CD8-positive, alpha-beta memory T cell (primary cell): ENCODE measurements at regions of chr2 and their contacts with region 1.

Region 1: GRCh38 chr2:26033818-26034636 is at the start of gene RAB10:
- DNase-seq: peak; percentile 97 to 100 (median 99)
- H3K4me3 ChIP-seq: peak within 1 kb of the TSS; percentile 98
- H3K4me3 Mint-ChIP-seq: peak within 1 kb of the TSS; percentile 84 to 99 (median 96)
- H3K27ac ChIP-seq: peak within 1 kb of the TSS; percentile 92
- H3K27ac Mint-ChIP-seq: peak within 1 kb of the TSS; percentile 95 to 97 (median 96)
- H3K4me1 ChIP-seq: peaks cover 30% of the 10 kb centered on the region
- H3K4me1 Mint-ChIP-seq: peaks cover 38 to 50% (median 39%) of the 10 kb centered on the region in 3 donors
- H3K27me3 ChIP-seq: no peaks in the 10 kb centered on the region
- H3K27me3 Mint-ChIP-seq: no peaks in the 10 kb centered on the region
- total RNA-seq, gene RAB10: 155 to 167 TPM

Region 2: GRCh38 chr2:25726522-25726921 is 307.5 kb before region 1 on chr2:
- CTCF ChIA-PET with region 1: no interaction called
- POLR2A ChIA-PET with region 1: no interaction called
- DNase-seq: no peak
- H3K4me3 ChIP-seq: no peak overlapping the region
- H3K4me3 Mint-ChIP-seq: no peak overlapping the region
- H3K27ac ChIP-seq: no peak overlapping the region
- H3K27ac Mint-ChIP-seq: no peak overlapping the region
- H3K4me1 ChIP-seq: no peaks in the 10 kb centered on the region
- H3K4me1 Mint-ChIP-seq: peaks cover 0 to 7% (median 4%) of the 10 kb centered on the region in 3 donors
- H3K27me3 ChIP-seq: no peaks in the 10 kb centered on the region
- H3K27me3 Mint-ChIP-seq: peaks cover 3% of the 10 kb centered on the region in 2 donors

Region 3: GRCh38 chr2:25878361-25879132 is 155.5 kb before region 1 on chr2 and contains the start of gene ASXL2:
- CTCF ChIA-PET with region 1: interaction called, 3 read pairs
- POLR2A ChIA-PET with region 1: interaction called, 10 read pairs
- DNase-seq: peak; percentile 95 to 99 (median 97)
- H3K4me3 ChIP-seq: peak within 1 kb of the TSS; percentile 90
- H3K4me3 Mint-ChIP-seq: peak within 1 kb of the TSS; percentile 93 to 97 (median 96)
- H3K27ac ChIP-seq: peak within 1 kb of the TSS; percentile 96
- H3K27ac Mint-ChIP-seq: peak within 1 kb of the TSS; percentile 97 to 99 (median 98)
- H3K4me1 ChIP-seq: peaks cover 25% of the 10 kb centered on the region
- H3K4me1 Mint-ChIP-seq: peaks cover 30 to 43% (median 43%) of the 10 kb centered on the region in 3 donors
- H3K27me3 ChIP-seq: no peaks in the 10 kb centered on the region
- H3K27me3 Mint-ChIP-seq: no peaks in the 10 kb centered on the region
- total RNA-seq, gene ASXL2: 67.5 to 72.7 TPM

Region 4: DNA sequence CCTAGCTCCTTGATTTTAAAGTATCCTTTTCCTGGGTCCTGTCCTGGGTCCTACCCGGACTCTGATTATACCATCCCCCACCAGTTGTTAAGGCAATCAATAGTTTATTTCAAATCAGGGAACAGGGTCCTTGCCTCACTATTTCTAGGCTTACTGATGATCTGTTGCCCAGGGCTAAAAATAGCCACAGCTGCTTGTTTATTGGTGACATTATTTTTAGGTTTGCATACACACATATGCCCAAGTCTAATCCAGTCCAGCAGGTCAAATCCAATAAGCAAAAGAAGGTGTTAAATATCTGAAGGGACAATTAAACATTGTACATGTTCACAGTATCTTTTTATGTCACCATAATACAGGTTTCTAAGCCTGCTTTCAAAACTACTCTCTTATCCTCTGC is 65.9 kb after region 1 on chr2:
- CTCF ChIA-PET with region 1: no interaction called
- POLR2A ChIA-PET with region 1: no interaction called
- DNase-seq: no peak
- H3K4me3 ChIP-seq: no peak overlapping the region
- H3K4me3 Mint-ChIP-seq: no peak overlapping the region
- H3K27ac ChIP-seq: no peak overlapping the region
- H3K27ac Mint-ChIP-seq: peak overlapping the region in 3 of 8 donors; percentile 15 to 40 (median 36)
- H3K4me1 ChIP-seq: no peaks in the 10 kb centered on the region
- H3K4me1 Mint-ChIP-seq: peaks cover 48 to 73% (median 51%) of the 10 kb centered on the region in 3 donors
- H3K27me3 ChIP-seq: no peaks in the 10 kb centered on the region
- H3K27me3 Mint-ChIP-seq: no peaks in the 10 kb centered on the region

Region 5: DNA sequence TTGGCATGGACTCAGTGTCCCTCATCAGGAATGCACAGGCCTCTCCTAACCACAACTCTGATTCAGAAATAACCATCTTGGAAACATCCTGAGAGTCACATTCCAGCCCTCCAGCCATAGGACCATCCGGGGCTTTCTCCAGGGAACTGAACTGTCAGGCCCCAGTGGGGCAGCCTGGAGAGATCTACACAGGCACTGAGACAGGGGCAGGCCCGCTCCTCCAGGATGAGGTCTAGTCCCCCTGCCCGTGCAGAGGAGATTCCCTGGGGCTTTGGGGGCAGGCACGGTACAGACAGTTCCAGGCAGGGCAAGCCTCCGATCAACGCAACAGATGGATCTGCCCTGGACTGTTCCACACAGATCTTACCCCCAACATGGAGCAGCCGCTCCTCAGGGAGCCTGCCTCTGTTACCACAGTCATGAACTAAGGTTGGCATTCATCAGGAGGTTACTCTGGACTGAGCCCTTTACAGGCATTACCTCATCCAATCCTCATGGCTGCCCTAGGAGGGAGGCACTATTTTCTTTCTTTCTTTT is 670.5 kb after region 1 on chr2:
- CTCF ChIA-PET with region 1: no interaction called
- POLR2A ChIA-PET with region 1: no interaction called
- DNase-seq: no peak
- H3K4me3 ChIP-seq: no peak overlapping the region
- H3K4me3 Mint-ChIP-seq: no peak overlapping the region
- H3K27ac ChIP-seq: no peak overlapping the region
- H3K27ac Mint-ChIP-seq: peak overlapping the region in 1 of 8 donors; percentile 59
- H3K4me1 ChIP-seq: no peaks in the 10 kb centered on the region
- H3K4me1 Mint-ChIP-seq: no peaks in the 10 kb centered on the region
- H3K27me3 ChIP-seq: no peaks in the 10 kb centered on the region
- H3K27me3 Mint-ChIP-seq: peaks cover 18 to 53% of the 10 kb centered on the region in 2 donors